HepG2 (cell line): ENCODE measurements at regions of chr18 and their contacts with region 1.

Region 1: GRCh38 chr18:12038639-12039417 is 54.8 kb upstream of the ANKRD62 start:
- DNase-seq: peak; percentile 68
- ATAC-seq: peak; percentile 91
- H3K4me3 ChIP-seq: peak overlapping the region; percentile 50 to 75 (median 62); a peak in 5 of 6 replicates
- H3K27ac ChIP-seq: no peak overlapping the region
- H3K4me1 ChIP-seq: peaks cover 27% of the 10 kb centered on the region
- H3K27me3 ChIP-seq: peaks cover 0 to 10% of the 10 kb centered on the region in 2 experiments; a peak in 4 of 5 replicates
- CTCF ChIP-seq: peak; percentile 100
- EP300 ChIP-seq: no peak
- POLR2A ChIP-seq: no peak
- RAD21 ChIP-seq: peak; percentile 99

Region 2: GRCh38 chr18:10442551-10442971 is 1596.3 kb before region 1 on chr18:
- CTCF ChIA-PET with region 1: no interaction called
- POLR2A ChIA-PET with region 1: no interaction called
- in situ Hi-C with region 1: no loop called
- intact Hi-C with region 1: no loop called
- DNase-seq: no peak
- ATAC-seq: no peak
- H3K4me3 ChIP-seq: no peak overlapping the region
- H3K27ac ChIP-seq: no peak overlapping the region
- H3K4me1 ChIP-seq: no peaks in the 10 kb centered on the region; the same call in 1 of the 2 replicates
- H3K27me3 ChIP-seq: peaks cover 1 to 16% of the 10 kb centered on the region in 2 experiments; a peak in 3 of 5 replicates
- CTCF ChIP-seq: no peak
- EP300 ChIP-seq: no peak
- POLR2A ChIP-seq: no peak
- RAD21 ChIP-seq: no peak

Region 3: DNA sequence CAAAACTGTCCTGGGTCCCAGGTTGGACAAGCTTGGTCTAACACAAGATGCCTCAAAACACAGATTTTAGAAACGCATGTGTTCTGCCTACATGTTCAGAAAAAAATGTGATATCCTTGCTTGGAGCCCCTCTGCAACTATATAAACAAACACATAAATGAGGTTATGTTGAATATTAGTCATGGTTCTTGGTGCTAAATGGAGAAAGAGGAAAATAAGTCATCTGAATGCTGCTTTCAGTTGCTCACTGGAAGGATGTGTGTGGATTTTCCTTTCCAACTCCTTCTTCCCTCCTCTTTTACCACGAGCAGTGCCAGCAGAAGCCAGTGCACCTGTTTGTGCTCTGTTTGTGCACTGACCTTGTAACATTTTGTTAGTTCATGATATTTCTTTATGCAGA is 974.7 kb before region 1 on chr18:
- CTCF ChIA-PET with region 1: no interaction called
- POLR2A ChIA-PET with region 1: no interaction called
- in situ Hi-C with region 1: no loop called
- intact Hi-C with region 1: no loop called
- DNase-seq: no peak
- ATAC-seq: no peak
- H3K4me3 ChIP-seq: no peak overlapping the region
- H3K27ac ChIP-seq: no peak overlapping the region
- H3K4me1 ChIP-seq: no peaks in the 10 kb centered on the region
- H3K27me3 ChIP-seq: no peaks in the 10 kb centered on the region
- CTCF ChIP-seq: no peak
- EP300 ChIP-seq: no peak
- POLR2A ChIP-seq: no peak
- RAD21 ChIP-seq: no peak

Region 4: GRCh38 chr18:11733031-11733430 is 305.8 kb before region 1 on chr18:
- CTCF ChIA-PET with region 1: interaction called, 8 read pairs
- POLR2A ChIA-PET with region 1: no interaction called
- in situ Hi-C with region 1: loop called (anchors 5 kb)
- intact Hi-C with region 1: loop called (anchors 2 kb)
- DNase-seq: peak; percentile 32
- ATAC-seq: peak; percentile 98
- H3K4me3 ChIP-seq: peak overlapping the region in 1 of 3 experiments; percentile 12; a peak in 1 of 6 replicates
- H3K27ac ChIP-seq: no peak overlapping the region
- H3K4me1 ChIP-seq: no peaks in the 10 kb centered on the region
- H3K27me3 ChIP-seq: peaks cover 0 to 9% of the 10 kb centered on the region in 2 experiments; a peak in 2 of 5 replicates
- CTCF ChIP-seq: peak; percentile 93
- EP300 ChIP-seq: no peak
- POLR2A ChIP-seq: no peak
- RAD21 ChIP-seq: peak; percentile 85

Region 5: DNA sequence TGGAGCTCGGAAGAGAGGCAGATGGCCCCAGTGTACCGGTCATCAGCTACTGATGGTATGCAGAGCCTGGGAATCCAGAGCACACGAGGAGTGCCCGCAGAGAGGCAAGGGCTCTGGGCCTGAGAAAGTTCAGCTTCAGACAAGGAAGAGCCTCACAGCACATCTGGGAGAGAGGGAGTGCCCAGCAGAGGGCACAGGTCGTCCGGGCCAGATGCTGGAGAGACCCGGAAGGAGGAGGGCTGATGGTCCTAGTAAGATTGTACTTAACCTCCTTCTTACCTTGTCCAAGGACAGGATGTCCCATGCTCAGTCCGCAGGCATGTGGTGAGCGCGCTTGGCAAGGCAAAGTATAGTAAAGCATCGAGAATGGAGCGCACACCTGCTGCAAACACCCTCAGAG is 212.0 kb before region 1 on chr18:
- CTCF ChIA-PET with region 1: no interaction called
- POLR2A ChIA-PET with region 1: no interaction called
- in situ Hi-C with region 1: no loop called
- intact Hi-C with region 1: loop called (anchors 2 kb)
- DNase-seq: peak; percentile 34
- ATAC-seq: peak; percentile 94
- H3K4me3 ChIP-seq: no peak overlapping the region
- H3K27ac ChIP-seq: no peak overlapping the region
- H3K4me1 ChIP-seq: no peaks in the 10 kb centered on the region
- H3K27me3 ChIP-seq: no peaks in the 10 kb centered on the region
- CTCF ChIP-seq: peak; percentile 82
- EP300 ChIP-seq: no peak
- POLR2A ChIP-seq: no peak
- RAD21 ChIP-seq: peak; percentile 83

Region 6: GRCh38 chr18:11937874-11938478 is 100.9 kb before region 1 on chr18:
- CTCF ChIA-PET with region 1: interaction called, 19 read pairs
- POLR2A ChIA-PET with region 1: interaction called, 3 read pairs
- in situ Hi-C with region 1: no loop called
- intact Hi-C with region 1: loop called (anchors 1 kb)
- DNase-seq: peak; percentile 48
- ATAC-seq: peak; percentile 68
- H3K4me3 ChIP-seq: no peak overlapping the region
- H3K27ac ChIP-seq: no peak overlapping the region
- H3K4me1 ChIP-seq: no peaks in the 10 kb centered on the region
- H3K27me3 ChIP-seq: no peaks in the 10 kb centered on the region; a peak in 1 of 5 replicates
- CTCF ChIP-seq: peak; percentile 87
- EP300 ChIP-seq: no peak
- POLR2A ChIP-seq: no peak
- RAD21 ChIP-seq: peak; percentile 86

Region 7: GRCh38 chr18:12005538-12006487 is 33.0 kb before region 1 on chr18:
- CTCF ChIA-PET with region 1: no interaction called
- POLR2A ChIA-PET with region 1: no interaction called
- in situ Hi-C with region 1: no loop called
- intact Hi-C with region 1: no loop called
- DNase-seq: no peak
- ATAC-seq: no peak
- H3K4me3 ChIP-seq: no peak overlapping the region
- H3K27ac ChIP-seq: peak overlapping the region; percentile 32
- H3K4me1 ChIP-seq: peaks cover 40% of the 10 kb centered on the region
- H3K27me3 ChIP-seq: no peaks in the 10 kb centered on the region
- CTCF ChIP-seq: no peak
- EP300 ChIP-seq: no peak
- POLR2A ChIP-seq: no peak
- RAD21 ChIP-seq: no peak

Region 8: GRCh38 chr18:12018861-12019260 is 20.0 kb before region 1 on chr18:
- CTCF ChIA-PET with region 1: no interaction called
- POLR2A ChIA-PET with region 1: no interaction called
- in situ Hi-C with region 1: no loop called
- intact Hi-C with region 1: loop called (anchors 1 kb)
- DNase-seq: no peak
- ATAC-seq: no peak
- H3K4me3 ChIP-seq: no peak overlapping the region
- H3K27ac ChIP-seq: no peak overlapping the region
- H3K4me1 ChIP-seq: peaks cover 13% of the 10 kb centered on the region
- H3K27me3 ChIP-seq: no peaks in the 10 kb centered on the region
- CTCF ChIP-seq: no peak
- EP300 ChIP-seq: no peak
- POLR2A ChIP-seq: no peak
- RAD21 ChIP-seq: no peak

Region 9: GRCh38 chr18:12408247-12408869 is 369.5 kb after region 1 on chr18:
- CTCF ChIA-PET with region 1: no interaction called
- POLR2A ChIA-PET with region 1: no interaction called
- in situ Hi-C with region 1: no loop called
- intact Hi-C with region 1: no loop called
- DNase-seq: no peak
- ATAC-seq: no peak
- H3K4me3 ChIP-seq: no peak overlapping the region
- H3K27ac ChIP-seq: no peak overlapping the region
- H3K4me1 ChIP-seq: peaks cover 49% of the 10 kb centered on the region
- H3K27me3 ChIP-seq: peaks cover 0 to 11% of the 10 kb centered on the region in 2 experiments; a peak in 2 of 5 replicates
- CTCF ChIP-seq: no peak
- EP300 ChIP-seq: no peak
- POLR2A ChIP-seq: no peak
- RAD21 ChIP-seq: no peak